A549 (cell line): ENCODE measurements at regions of chr7 and their contacts with region 1.

Region 1: DNA sequence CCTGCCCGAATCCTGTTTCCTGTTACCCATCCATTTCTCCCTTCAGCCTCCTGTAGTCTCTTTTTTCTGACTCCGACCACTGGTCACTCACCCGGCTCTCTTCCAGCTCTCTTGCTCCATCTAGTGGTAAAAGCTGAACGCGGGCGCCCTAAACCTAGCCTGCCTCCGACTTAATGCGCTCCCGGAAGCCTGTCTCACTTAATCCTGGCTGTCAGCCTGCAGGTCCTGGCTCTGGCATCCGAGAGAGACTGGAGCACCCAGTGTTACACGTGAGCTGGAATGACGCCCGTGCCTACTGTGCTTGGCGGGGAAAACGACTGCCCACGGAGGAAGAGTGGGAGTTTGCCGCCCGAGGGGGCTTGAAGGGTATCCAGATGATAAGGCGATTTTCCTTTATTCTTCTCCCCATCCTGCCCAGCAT is 10.3 kb downstream of the SUMF2 start:
- DNase-seq: peak; percentile 54 to 82
- ATAC-seq: peak; percentile 98
- H3K4me3 ChIP-seq: no peak overlapping the region
- H3K27ac ChIP-seq: peak overlapping the region in 1 of 2 experiments; percentile 40; a peak in 1 of 6 replicates
- H3K4me1 ChIP-seq: 0 out of 3 replicates have a peak, but pooled peaks cover 3% of the 10 kb centered on the region
- CTCF ChIP-seq: peak; percentile 78
- EP300 ChIP-seq: no peak
- POLR2A ChIP-seq: no peak
- RAD21 ChIP-seq: peak; percentile 89 to 92

Region 2: DNA sequence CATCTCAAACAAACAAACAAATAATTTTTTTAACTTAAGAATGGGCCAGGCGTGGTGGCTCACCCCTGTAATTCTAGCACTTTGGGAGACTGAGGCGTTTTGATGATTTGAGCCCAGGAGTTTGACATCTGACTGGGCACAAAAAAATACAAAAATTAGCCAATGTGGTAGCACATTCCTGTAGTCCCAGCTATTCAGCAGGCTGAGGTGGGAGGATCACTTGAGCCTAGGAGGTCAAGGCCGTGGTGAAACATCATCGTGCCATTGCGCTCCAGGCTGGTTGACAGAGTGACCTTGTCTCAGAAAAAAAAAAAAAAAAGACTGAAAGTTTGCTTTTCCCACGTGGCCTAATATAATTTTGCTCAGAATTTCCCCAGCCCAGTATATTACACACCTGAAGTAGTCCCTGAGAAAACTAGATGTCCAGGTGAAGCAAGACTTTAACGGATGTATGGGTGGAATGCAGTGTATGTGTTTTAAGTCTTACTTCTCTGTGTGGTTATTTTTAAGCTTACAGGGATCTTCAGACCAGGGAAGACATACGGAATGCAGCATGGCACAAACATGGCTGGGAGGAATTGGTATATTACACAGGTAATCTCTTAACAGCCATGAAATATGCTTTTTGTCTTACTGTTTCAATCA is 77.4 kb before region 1 on chr7:
- CTCF ChIA-PET with region 1: interaction called, 14 read pairs
- POLR2A ChIA-PET with region 1: no interaction called
- DNase-seq: no peak
- ATAC-seq: no peak
- H3K4me3 ChIP-seq: no peak overlapping the region
- H3K27ac ChIP-seq: no peak overlapping the region
- H3K4me1 ChIP-seq: no peaks in the 10 kb centered on the region
- CTCF ChIP-seq: no peak
- EP300 ChIP-seq: no peak
- POLR2A ChIP-seq: no peak
- RAD21 ChIP-seq: no peak

Region 3: GRCh38 chr7:56051339-56052191 is 22.8 kb before region 1 on chr7 and contains the starts of genes CCT6A and PSPH:
- CTCF ChIA-PET with region 1: interaction called, 8 read pairs
- POLR2A ChIA-PET with region 1: interaction called, 14 read pairs
- DNase-seq: peak; percentile 89 to 98
- ATAC-seq: peak; percentile 94 to 95
- H3K4me3 ChIP-seq: peak within 1 kb of the TSS; percentile 96
- H3K27ac ChIP-seq: peak within 1 kb of the TSS; percentile 98
- H3K4me1 ChIP-seq: peaks cover 58% of the 10 kb centered on the region
- CTCF ChIP-seq: no peak
- EP300 ChIP-seq: no peak
- POLR2A ChIP-seq: peak; percentile 96
- RAD21 ChIP-seq: no peak
- polyA plus RNA-seq, gene CCT6A: 444 and 520 TPM in 2 replicates
- polyA plus RNA-seq, gene PSPH: 52.7 and 60.9 TPM in 2 replicates

Region 4: GRCh38 chr7:56087445-56087844 is 13.1 kb after region 1 on chr7:
- CTCF ChIA-PET with region 1: interaction called, 21 read pairs
- POLR2A ChIA-PET with region 1: no interaction called
- DNase-seq: no peak
- ATAC-seq: no peak
- H3K4me3 ChIP-seq: no peak overlapping the region
- H3K27ac ChIP-seq: no peak overlapping the region
- H3K4me1 ChIP-seq: no peaks in the 10 kb centered on the region; the same call in 2 of the 3 replicates
- CTCF ChIP-seq: no peak
- EP300 ChIP-seq: no peak
- POLR2A ChIP-seq: no peak
- RAD21 ChIP-seq: no peak

Region 5: DNA sequence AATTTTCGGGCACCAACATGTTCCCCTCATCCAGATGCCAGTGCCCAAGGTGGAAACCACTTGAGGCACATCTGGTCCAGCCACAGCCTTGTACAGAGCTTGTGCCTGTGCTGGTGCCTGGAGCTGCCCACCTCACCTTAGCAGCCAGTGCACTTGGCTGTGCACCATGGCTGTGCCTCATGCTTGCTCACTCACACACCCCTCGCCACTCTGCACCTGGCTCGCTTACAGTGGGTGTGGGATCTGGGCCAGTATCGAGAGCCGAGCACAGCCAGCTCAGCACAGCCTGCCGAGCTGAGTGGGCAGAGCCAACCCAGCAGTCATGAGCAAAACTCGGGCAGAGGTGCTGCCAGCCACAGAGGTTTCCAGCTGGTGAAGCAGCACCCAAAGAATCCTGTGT is 181.7 kb after region 1 on chr7:
- CTCF ChIA-PET with region 1: no interaction called
- POLR2A ChIA-PET with region 1: no interaction called
- DNase-seq: no peak
- ATAC-seq: no peak
- H3K4me3 ChIP-seq: no peak overlapping the region
- H3K27ac ChIP-seq: no peak overlapping the region
- H3K4me1 ChIP-seq: no peaks in the 10 kb centered on the region
- CTCF ChIP-seq: no peak
- EP300 ChIP-seq: no peak
- POLR2A ChIP-seq: no peak
- RAD21 ChIP-seq: no peak